Uterus (tissue), 4 donors: ENCODE measurements at regions of chr3 and their contacts with region 1.

Region 1: DNA sequence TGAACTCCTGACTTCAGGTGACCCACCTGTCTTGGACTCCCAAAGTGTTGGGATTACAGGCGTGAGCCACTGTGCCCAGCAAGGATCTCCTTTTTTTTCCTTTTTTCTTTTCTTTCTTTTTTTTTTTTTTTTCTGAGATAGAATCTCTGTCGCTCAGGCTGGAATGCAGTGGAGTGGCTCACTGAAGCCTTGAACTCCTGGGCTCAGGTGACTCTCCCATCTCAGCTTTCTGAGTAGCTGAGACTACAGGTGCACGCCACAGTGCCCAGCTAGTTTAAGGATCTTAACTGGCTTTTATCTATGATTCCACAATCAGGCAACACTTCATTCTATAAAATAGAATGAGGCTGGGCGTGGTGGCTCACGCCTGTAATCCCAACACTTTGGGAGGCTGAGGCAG is 16.3 kb upstream of the NICN1 start:
- DNase-seq: no peak
- H3K4me3 ChIP-seq: no peak overlapping the region
- H3K27ac ChIP-seq: no peak overlapping the region
- H3K4me1 ChIP-seq: peaks cover 0 to 4% of the 10 kb centered on the region in 2 donors
- H3K27me3 ChIP-seq: no peaks in the 10 kb centered on the region
- CTCF ChIP-seq: no peak
- POLR2A ChIP-seq: no peak

Region 2: GRCh38 chr3:48989796-48990635 is 455.4 kb before region 1 on chr3 and contains the start of gene P4HTM:
- intact Hi-C with region 1: loop called (anchors 10 kb)
- DNase-seq: peak; percentile 94
- H3K4me3 ChIP-seq: peak within 1 kb of the TSS; percentile 56 to 70
- H3K27ac ChIP-seq: peak within 1 kb of the TSS; percentile 93 to 94
- H3K4me1 ChIP-seq: peaks cover 0 to 9% of the 10 kb centered on the region in 2 donors
- H3K27me3 ChIP-seq: no peaks in the 10 kb centered on the region
- CTCF ChIP-seq: peak; percentile 34 to 59 (median 40)
- POLR2A ChIP-seq: peak; percentile 41 to 76
- total RNA-seq, gene P4HTM: 35.0 to 81.5 (median 51.1) TPM

Region 3: DNA sequence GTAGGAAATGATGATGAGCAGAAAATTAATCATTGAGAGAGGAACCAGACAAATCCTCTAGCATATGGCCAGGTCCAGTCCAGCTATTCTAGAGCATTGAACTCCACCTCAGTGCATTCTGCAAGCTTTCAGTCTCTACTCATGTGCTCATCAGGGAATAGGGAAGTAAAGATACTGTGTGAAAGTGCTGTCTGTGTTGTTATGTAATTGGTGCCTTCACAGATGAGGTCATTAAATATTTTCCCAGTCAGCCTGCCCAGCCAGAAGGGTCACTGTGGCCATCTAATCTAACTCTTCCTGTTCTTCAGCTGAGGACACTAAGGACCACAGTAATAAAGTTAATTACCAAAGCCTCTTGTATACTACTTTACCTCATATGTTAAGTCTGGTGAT is 196.5 kb before region 1 on chr3:
- intact Hi-C with region 1: no loop called
- DNase-seq: peak in 1 of 2 donors; percentile 33
- H3K4me3 ChIP-seq: no peak overlapping the region
- H3K27ac ChIP-seq: peak overlapping the region; percentile 58 to 78
- H3K4me1 ChIP-seq: no peaks in the 10 kb centered on the region
- H3K27me3 ChIP-seq: no peaks in the 10 kb centered on the region
- CTCF ChIP-seq: no peak
- POLR2A ChIP-seq: no peak